Right cardiac atrium (tissue), 5 donors: ENCODE measurements at regions of chr5 and their contacts with region 1.

Region 1: DNA sequence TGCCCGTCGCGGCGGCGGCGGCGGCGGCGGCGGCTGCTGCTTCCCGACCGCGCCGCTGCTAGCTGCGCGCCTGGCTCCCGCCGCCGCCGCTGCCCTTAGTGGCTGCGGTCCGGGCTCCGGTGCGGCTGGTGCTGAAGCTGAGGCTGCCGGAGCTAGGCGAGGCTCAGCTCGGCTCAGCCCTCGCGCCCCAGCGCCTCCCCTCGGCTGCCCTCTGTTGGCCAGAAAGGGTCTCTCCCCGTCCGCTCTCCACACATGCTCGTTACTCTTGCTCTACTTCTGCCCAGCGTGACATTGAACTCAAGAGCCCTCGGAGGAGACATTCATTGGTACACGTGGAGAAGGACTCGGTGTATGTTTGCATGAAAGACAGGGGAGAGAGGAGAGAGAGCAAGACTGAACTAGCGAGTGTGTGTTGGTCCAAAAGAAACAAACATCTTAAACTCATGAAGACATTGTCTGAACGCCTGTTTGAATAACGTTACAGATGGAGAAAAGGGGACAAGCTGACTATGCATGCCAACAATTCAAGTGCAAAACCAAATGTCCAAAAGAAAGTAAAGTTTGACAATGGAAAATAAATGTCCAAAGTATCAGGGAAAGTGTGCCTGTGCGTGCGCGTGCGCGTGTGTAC is at the start of gene HCN1:
- DNase-seq: peak; percentile 78 to 91 (median 88)
- ATAC-seq: peak; percentile 99
- H3K4me3 ChIP-seq: peak within 1 kb of the TSS; percentile 42
- H3K27ac ChIP-seq: no peak within 1 kb of the TSS
- H3K4me1 ChIP-seq: no peaks in the 10 kb centered on the region
- H3K27me3 ChIP-seq: no peaks in the 10 kb centered on the region
- total RNA-seq, gene HCN1: 13.1 to 15.5 (median 14.3) TPM

Region 2: DNA sequence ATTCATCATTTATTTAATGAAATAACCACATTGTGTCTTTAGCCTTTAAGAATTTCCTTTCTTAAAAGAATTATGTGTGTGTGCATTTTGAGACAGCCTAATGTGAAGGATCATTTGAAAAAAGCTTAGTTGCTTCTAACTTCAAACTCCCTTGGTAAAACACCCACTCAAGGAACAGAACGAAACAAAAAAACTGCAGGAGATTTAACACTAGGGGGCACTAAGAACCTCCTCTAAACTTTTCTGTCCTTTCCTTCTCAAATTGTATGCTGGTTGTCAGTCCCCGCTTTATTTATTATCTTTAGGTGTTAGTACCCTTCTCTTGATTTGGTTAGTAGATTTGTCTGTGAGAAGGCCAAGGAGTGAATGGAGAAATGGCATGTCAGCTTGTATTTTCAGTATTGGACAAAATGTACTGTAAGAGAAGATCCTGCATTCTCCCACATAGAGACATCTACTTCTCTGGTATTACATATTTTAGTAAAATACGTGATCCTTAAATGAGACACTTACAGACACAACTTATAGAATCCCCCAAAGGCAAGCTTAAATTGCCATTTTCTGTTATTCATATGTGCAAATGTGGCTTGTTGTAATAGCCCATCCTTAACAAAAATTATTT is 657.8 kb before region 1 on chr5:
- intact Hi-C with region 1: loop called in 1 of 4 experiments (anchors 10 kb)
- DNase-seq: no peak
- ATAC-seq: no peak
- H3K4me3 ChIP-seq: no peak overlapping the region
- H3K27ac ChIP-seq: no peak overlapping the region
- H3K4me1 ChIP-seq: no peaks in the 10 kb centered on the region
- H3K27me3 ChIP-seq: no peaks in the 10 kb centered on the region

Region 3: GRCh38 chr5:45189481-45189880 is 506.8 kb before region 1 on chr5:
- intact Hi-C with region 1: no loop called
- DNase-seq: no peak
- ATAC-seq: no peak
- H3K4me3 ChIP-seq: no peak overlapping the region
- H3K27ac ChIP-seq: no peak overlapping the region
- H3K4me1 ChIP-seq: no peaks in the 10 kb centered on the region
- H3K27me3 ChIP-seq: no peaks in the 10 kb centered on the region

Region 4: DNA sequence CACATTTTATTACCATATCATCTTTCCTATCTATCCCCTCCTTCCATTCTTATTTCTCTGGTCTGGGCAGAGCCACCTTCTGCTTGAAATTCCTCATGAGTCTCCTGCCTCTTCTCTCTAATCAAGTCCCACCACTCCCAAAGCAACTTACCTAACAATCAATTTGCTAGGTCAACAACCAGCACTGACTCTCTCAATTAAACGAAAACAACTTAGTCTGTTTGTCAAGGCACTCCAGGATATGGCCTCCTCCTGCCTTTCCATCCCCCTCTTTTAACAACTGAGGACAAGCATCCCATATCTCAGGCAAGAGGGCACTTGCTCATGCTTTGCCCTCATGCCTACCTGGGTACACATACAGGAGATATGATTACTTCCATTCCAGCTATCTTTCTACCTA is 47.6 kb before region 1 on chr5:
- intact Hi-C with region 1: no loop called
- DNase-seq: no peak
- ATAC-seq: no peak
- H3K4me3 ChIP-seq: no peak overlapping the region
- H3K27ac ChIP-seq: no peak overlapping the region
- H3K4me1 ChIP-seq: no peaks in the 10 kb centered on the region
- H3K27me3 ChIP-seq: no peaks in the 10 kb centered on the region

Region 5: GRCh38 chr5:45774528-45774927 is 78.2 kb after region 1 on chr5:
- intact Hi-C with region 1: loop called in 1 of 4 experiments (anchors 2 kb)
- DNase-seq: no peak
- ATAC-seq: no peak
- H3K4me3 ChIP-seq: no peak overlapping the region
- H3K27ac ChIP-seq: no peak overlapping the region
- H3K4me1 ChIP-seq: no peaks in the 10 kb centered on the region
- H3K27me3 ChIP-seq: no peaks in the 10 kb centered on the region